Activated CD4-positive, alpha-beta memory T cell treated with anti-CD3 and anti-CD28 coated beads for 36 hours (primary cell): ENCODE measurements at regions of chr11 and their contacts with region 1.

Region 1: DNA sequence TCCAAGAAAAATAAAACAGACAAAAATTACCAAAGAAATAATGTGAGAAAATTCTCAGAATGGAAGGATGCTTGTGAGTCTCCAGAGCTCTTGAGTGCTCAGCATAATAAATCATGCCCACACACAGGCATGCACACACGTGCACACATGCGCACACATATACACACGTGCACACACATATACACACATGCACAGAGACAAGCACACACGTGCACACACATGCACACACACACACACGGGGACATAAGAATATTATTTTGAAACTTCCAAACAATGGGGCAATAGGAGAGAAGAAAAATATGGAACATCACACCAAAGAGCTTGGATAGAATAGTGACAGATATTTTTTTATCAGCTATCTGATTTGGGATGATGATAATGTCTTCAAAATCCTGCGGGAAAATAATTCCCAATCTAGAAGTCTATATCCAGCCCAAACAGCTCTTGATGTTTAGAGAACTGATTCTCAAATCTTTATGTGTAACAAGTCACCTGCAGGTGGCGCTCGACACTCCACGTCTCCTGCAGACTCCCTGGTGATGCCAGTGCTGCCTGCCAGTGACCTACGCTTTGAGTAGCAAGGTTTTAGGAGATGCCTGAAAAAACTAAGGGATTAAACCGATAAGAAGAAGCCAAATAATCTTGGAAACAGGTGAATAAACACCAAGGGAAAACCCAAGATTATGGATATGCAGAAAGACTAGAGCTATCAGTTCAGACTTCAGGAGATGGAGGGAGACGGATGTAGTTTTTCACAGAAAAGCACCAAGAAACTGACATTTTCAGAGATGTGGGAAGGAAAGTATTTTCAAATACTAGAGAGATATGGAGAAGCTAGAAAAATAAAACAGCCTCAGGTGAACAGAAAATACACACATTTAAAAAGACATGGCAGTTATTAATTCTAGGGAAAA is 743.6 kb downstream of the ETS1 start:
- DNase-seq: peak; percentile 78
- H3K4me3 Mint-ChIP-seq: no peak overlapping the region
- H3K27ac Mint-ChIP-seq: no peak overlapping the region
- H3K4me1 Mint-ChIP-seq: no peaks in the 10 kb centered on the region
- H3K27me3 Mint-ChIP-seq: peaks cover 6% of the 10 kb centered on the region

Region 2: DNA sequence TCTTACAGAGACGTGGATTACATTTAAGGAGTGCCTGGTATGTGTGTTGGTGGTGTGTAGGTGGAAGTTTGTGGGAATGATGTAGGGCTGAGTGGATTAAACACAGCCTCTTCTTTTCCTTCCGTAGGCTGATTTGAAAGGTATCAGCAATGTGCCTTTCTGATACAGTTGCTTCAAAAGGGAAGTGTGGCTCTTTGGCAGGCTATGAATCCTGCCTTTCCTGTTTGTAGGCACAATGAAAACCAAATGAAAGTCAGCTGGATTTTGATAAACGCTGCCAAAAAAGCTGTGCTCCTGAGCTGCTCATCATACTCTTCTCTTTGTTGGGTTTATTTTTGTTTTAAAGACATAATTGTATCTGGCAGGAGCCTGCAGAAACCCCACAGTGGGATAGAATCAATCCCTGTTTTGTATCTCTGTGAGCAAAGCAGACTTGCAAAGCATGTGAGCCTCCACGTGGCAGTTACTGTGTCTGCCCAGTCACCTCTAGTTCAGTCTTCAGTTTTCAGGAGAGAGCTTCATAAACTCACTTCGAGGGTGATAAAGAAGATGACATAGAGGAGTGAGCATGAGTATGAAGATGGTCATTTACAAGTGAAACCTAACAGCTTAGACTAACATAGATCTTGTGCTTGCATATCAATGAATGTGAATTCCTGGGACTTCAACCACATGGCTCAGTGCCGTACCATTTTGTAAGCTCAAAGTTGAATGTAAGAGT is 187.5 kb before region 1 on chr11:
- CTCF ChIA-PET with region 1: no interaction called
- POLR2A ChIA-PET with region 1: no interaction called
- intact Hi-C with region 1: no loop called
- DNase-seq: no peak
- H3K4me3 Mint-ChIP-seq: no peak overlapping the region
- H3K27ac Mint-ChIP-seq: no peak overlapping the region
- H3K4me1 Mint-ChIP-seq: no peaks in the 10 kb centered on the region
- H3K27me3 Mint-ChIP-seq: no peaks in the 10 kb centered on the region

Region 3: DNA sequence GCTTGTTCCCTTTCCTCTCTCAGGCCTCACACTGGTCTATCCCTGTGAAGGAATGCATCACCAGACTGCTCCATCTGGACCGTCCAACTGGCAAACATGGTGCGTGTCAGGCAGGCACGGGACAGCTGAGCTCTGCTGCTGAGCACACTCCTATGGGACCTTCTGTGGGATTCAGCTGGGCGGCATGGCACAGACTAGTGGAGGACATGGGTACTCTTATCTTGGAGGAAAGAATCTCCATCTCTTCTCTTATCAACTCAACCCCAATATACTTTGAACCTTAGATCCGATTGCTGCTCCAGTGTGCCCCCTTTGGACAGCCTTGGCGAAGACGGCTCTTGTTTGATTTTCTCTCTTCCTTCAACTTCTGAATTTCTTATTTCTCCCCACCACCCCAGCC is 150.0 kb after region 1 on chr11:
- CTCF ChIA-PET with region 1: interaction called, 7 read pairs
- POLR2A ChIA-PET with region 1: no interaction called
- intact Hi-C with region 1: loop called (anchors 5 kb)
- DNase-seq: no peak
- H3K4me3 Mint-ChIP-seq: no peak overlapping the region
- H3K27ac Mint-ChIP-seq: no peak overlapping the region
- H3K4me1 Mint-ChIP-seq: no peaks in the 10 kb centered on the region
- H3K27me3 Mint-ChIP-seq: peaks cover 3% of the 10 kb centered on the region

Region 4: GRCh38 chr11:128021349-128022006 is 177.7 kb after region 1 on chr11:
- CTCF ChIA-PET with region 1: interaction called, 10 read pairs
- POLR2A ChIA-PET with region 1: no interaction called
- intact Hi-C with region 1: loop called (anchors 5 kb)
- DNase-seq: no peak
- H3K4me3 Mint-ChIP-seq: no peak overlapping the region
- H3K27ac Mint-ChIP-seq: no peak overlapping the region
- H3K4me1 Mint-ChIP-seq: peaks cover 7% of the 10 kb centered on the region
- H3K27me3 Mint-ChIP-seq: no peaks in the 10 kb centered on the region